MCF 10A (cell line): ENCODE measurements at regions of chr5 and their contacts with region 1.

Region 1: DNA sequence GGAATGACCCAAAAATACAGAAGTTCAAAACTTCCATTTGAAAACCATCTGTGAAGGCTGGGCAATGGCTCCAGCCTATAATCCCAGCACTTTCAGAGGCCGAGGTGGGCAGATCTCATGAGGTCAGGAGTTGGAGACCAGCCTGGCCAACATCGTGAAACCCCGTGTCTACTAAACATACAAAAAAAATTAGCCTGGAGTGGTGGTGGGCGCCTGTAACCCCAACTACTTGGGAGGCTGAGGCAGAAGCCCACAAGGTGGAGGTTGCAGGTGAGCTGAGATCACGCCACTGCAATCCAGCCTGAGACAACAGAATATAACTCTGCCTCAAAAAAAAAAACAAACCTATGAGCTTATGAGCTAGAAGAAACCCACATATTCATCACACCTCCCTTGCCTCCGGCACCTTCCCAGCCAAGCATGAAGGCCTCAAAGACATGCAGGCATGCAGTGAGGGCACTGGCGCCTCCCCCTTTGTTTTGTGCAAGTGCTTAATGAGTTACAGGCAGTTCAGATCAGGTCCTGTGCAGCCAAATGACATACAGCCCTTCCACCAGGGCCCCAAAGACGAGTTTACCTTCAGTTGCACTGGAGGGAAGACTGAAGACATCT is 9.9 kb downstream of the HNRNPH1 start:
- DNase-seq: no peak
- H3K4me3 Mint-ChIP-seq: no peak overlapping the region
- H3K27ac Mint-ChIP-seq: peak overlapping the region; percentile 67
- H3K4me1 Mint-ChIP-seq: peaks cover 40% of the 10 kb centered on the region
- H3K27me3 Mint-ChIP-seq: no peaks in the 10 kb centered on the region
- CTCF ChIP-seq: no peak

Region 2: DNA sequence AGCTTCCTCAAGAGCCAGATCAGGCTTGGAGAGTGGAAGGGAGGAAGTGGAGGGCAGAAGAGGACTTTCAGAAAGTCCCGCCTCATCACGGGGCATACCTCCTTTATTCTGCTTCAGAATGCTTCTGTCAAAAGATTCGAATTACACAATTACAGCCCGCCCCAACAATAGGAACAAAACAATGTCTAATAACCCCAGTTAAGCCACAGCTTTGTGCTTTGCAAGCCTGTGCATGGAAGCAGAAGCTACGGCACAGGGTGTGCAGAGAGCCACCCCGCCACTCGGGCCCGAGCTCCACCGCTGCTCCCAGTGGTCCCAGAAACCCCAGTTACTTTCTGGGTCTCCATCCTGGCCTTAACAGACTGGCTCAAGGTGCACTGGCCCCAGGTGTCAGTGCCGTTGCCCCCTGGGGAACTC is 13.6 kb before region 1 on chr5:
- CTCF ChIA-PET with region 1: interaction called, 5 read pairs
- POLR2A ChIA-PET with region 1: interaction called, 197 read pairs
- intact Hi-C with region 1: no loop called
- DNase-seq: no peak
- H3K4me3 Mint-ChIP-seq: no peak overlapping the region
- H3K27ac Mint-ChIP-seq: no peak overlapping the region
- H3K4me1 Mint-ChIP-seq: no peaks in the 10 kb centered on the region
- H3K27me3 Mint-ChIP-seq: no peaks in the 10 kb centered on the region
- CTCF ChIP-seq: no peak